ENCODE measurements at regions of chr2 and their contacts with region 1.

Region 1: DNA sequence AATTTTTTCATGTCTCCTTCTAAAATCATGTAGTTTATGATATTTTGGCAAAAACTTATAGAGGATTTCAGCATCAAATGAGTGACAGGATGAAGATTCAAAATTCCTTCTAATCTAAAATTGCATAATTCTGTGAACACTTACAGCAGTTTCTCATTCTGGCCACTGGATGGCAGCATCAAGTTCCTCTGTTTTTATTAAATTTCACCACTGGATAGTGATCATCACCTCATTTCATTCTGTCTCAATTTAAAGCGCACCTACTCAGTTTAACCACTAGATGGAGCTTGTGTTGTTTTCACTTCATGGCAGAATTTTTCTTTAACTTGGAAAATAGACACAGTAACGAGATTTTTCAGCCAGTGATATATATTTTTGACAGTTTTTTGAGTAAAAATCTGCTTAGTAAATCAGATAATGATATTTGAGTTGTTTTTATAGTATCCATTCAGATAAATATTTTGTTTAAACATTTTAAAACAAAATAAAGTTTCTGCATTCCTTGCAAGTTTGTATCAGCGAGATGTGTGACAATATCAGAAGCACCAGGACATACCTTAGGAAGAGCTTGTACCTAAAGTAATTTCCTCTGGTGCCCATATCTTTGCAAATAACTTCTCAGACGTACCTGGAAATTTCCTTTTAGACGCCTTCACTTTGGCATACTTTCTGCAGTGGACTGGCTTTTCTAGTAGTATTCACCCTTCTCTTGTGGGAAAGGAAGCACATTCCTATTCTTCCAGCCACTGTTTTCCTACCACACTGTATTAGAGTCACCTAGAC is 94.7 kb upstream of the ARHGAP15 start:
- DNase-seq: peak in 7 of 9 donors; percentile 59 to 84 (median 75)
- ATAC-seq: peak; percentile 100
- H3K4me3 ChIP-seq: no peak overlapping the region
- H3K4me3 Mint-ChIP-seq: no peak overlapping the region
- H3K27ac ChIP-seq: no peak overlapping the region
- H3K27ac Mint-ChIP-seq: peak overlapping the region in 1 of 9 donors; percentile 15
- H3K4me1 ChIP-seq: no peaks in the 10 kb centered on the region
- H3K4me1 Mint-ChIP-seq: peaks cover 0 to 9% (median 0%) of the 10 kb centered on the region in 7 donors
- H3K27me3 ChIP-seq: no peaks in the 10 kb centered on the region
- H3K27me3 Mint-ChIP-seq: peaks cover 0 to 8% (median 0%) of the 10 kb centered on the region in 5 donors

Region 2: GRCh38 chr2:143051465-143051864 is 17.0 kb after region 1 on chr2:
- CTCF ChIA-PET with region 1: no interaction called
- POLR2A ChIA-PET with region 1: no interaction called
- intact Hi-C with region 1: no loop called
- DNase-seq: no peak
- ATAC-seq: no peak
- H3K4me3 ChIP-seq: no peak overlapping the region
- H3K4me3 Mint-ChIP-seq: no peak overlapping the region
- H3K27ac ChIP-seq: no peak overlapping the region
- H3K27ac Mint-ChIP-seq: no peak overlapping the region
- H3K4me1 ChIP-seq: no peaks in the 10 kb centered on the region
- H3K4me1 Mint-ChIP-seq: peaks cover 0 to 3% (median 0%) of the 10 kb centered on the region in 7 donors
- H3K27me3 ChIP-seq: no peaks in the 10 kb centered on the region
- H3K27me3 Mint-ChIP-seq: peaks cover 0 to 24% (median 12%) of the 10 kb centered on the region in 5 donors

Region 3: GRCh38 chr2:143110758-143111428 is 76.4 kb after region 1 on chr2:
- CTCF ChIA-PET with region 1: interaction called, 3 read pairs
- POLR2A ChIA-PET with region 1: no interaction called
- intact Hi-C with region 1: loop called (anchors 1 kb)
- DNase-seq: peak; percentile 18 to 70 (median 61)
- ATAC-seq: peak; percentile 90
- H3K4me3 ChIP-seq: no peak overlapping the region
- H3K4me3 Mint-ChIP-seq: peak overlapping the region in 4 of 10 donors; percentile 10 to 69 (median 60)
- H3K27ac ChIP-seq: no peak overlapping the region
- H3K27ac Mint-ChIP-seq: peak overlapping the region in 7 of 9 donors; percentile 17 to 83 (median 71)
- H3K4me1 ChIP-seq: peaks cover 0 to 20% of the 10 kb centered on the region in 2 donors
- H3K4me1 Mint-ChIP-seq: peaks cover 9 to 45% (median 38%) of the 10 kb centered on the region in 7 donors
- H3K27me3 ChIP-seq: no peaks in the 10 kb centered on the region
- H3K27me3 Mint-ChIP-seq: peaks cover 0 to 7% (median 6%) of the 10 kb centered on the region in 5 donors

Region 4: DNA sequence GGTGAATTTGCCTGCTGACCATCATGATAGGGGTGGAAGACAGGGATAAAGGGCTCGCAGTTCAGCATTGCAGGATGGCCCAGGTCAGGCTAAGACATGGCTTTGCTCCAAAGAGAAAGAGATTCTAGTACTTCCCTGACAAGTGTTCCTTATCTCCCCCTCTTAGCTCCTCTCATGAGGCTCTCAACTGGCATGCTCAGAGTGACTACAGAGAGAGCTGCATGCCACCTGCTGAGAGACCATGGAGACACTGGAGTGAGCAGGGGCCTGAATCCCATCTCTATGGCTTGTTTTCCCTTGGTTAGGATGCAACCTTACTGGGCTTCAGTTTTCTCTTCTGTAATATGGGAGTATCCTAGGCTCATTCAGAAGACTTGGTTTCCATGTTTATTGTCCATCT is 189.1 kb after region 1 on chr2:
- CTCF ChIA-PET with region 1: interaction called, 3 read pairs
- POLR2A ChIA-PET with region 1: no interaction called
- intact Hi-C with region 1: loop called (anchors 1 to 2 kb)
- DNase-seq: no peak
- ATAC-seq: no peak
- H3K4me3 ChIP-seq: no peak overlapping the region
- H3K4me3 Mint-ChIP-seq: no peak overlapping the region
- H3K27ac ChIP-seq: no peak overlapping the region
- H3K27ac Mint-ChIP-seq: peak overlapping the region in 8 of 9 donors; percentile 14 to 84 (median 64)
- H3K4me1 ChIP-seq: peaks cover 10 to 18% of the 10 kb centered on the region in 2 donors
- H3K4me1 Mint-ChIP-seq: peaks cover 27 to 71% (median 65%) of the 10 kb centered on the region in 7 donors
- H3K27me3 ChIP-seq: no peaks in the 10 kb centered on the region
- H3K27me3 Mint-ChIP-seq: no peaks in the 10 kb centered on the region

Region 5: GRCh38 chr2:143451642-143452281 is 417.3 kb after region 1 on chr2:
- CTCF ChIA-PET with region 1: no interaction called
- POLR2A ChIA-PET with region 1: no interaction called
- intact Hi-C with region 1: loop called in 1 of 2 experiments (anchors 10 kb)
- DNase-seq: no peak
- ATAC-seq: no peak
- H3K4me3 ChIP-seq: no peak overlapping the region
- H3K4me3 Mint-ChIP-seq: peak overlapping the region in 3 of 10 donors; percentile 7 to 44 (median 34)
- H3K27ac ChIP-seq: no peak overlapping the region
- H3K27ac Mint-ChIP-seq: peak overlapping the region in 3 of 9 donors; percentile 1 to 34 (median 23)
- H3K4me1 ChIP-seq: peaks cover 10 to 16% of the 10 kb centered on the region in 2 donors
- H3K4me1 Mint-ChIP-seq: peaks cover 22 to 78% (median 50%) of the 10 kb centered on the region in 7 donors
- H3K27me3 ChIP-seq: no peaks in the 10 kb centered on the region
- H3K27me3 Mint-ChIP-seq: no peaks in the 10 kb centered on the region

Region 6: GRCh38 chr2:144332356-144333142 is 1298.1 kb after region 1 on chr2:
- CTCF ChIA-PET with region 1: no interaction called
- POLR2A ChIA-PET with region 1: no interaction called
- intact Hi-C with region 1: loop called in 1 of 2 experiments (anchors 1 kb)
- DNase-seq: peak; percentile 65 to 97 (median 85)
- ATAC-seq: peak; percentile 95
- H3K4me3 ChIP-seq: peak overlapping the region; percentile 75
- H3K4me3 Mint-ChIP-seq: peak overlapping the region; percentile 91 to 96 (median 93)
- H3K27ac ChIP-seq: peak overlapping the region; percentile 64
- H3K27ac Mint-ChIP-seq: peak overlapping the region; percentile 54 to 91 (median 87)
- H3K4me1 ChIP-seq: peaks cover 5 to 26% of the 10 kb centered on the region in 2 donors
- H3K4me1 Mint-ChIP-seq: peaks cover 7 to 31% (median 13%) of the 10 kb centered on the region in 7 donors
- H3K27me3 ChIP-seq: no peaks in the 10 kb centered on the region
- H3K27me3 Mint-ChIP-seq: peaks cover 0 to 6% (median 0%) of the 10 kb centered on the region in 5 donors